Left cardiac atrium (tissue), 4 donors: ENCODE measurements at regions of chr22 and their contacts with region 1.

Region 1: GRCh38 chr22:22764085-22764484 is 119.7 kb downstream of the GGTLC2 start:
- DNase-seq: no peak
- ATAC-seq: no peak

Region 2: GRCh38 chr22:22706253-22706915 is 57.7 kb before region 1 on chr22:
- intact Hi-C with region 1: loop called (anchors 2 kb)
- DNase-seq: no peak
- ATAC-seq: no peak